ENCODE measurements at regions of chr20 and their contacts with region 1.

Region 1: GRCh38 chr20:4740774-4741431 is 19.2 kb downstream of the PRND start:
- DNase-seq: peak; percentile 58 to 66
- ATAC-seq: peak; percentile 72 to 86; a peak in 5 of 6 replicates
- H3K4me3 ChIP-seq: no peak overlapping the region
- H3K27ac ChIP-seq: no peak overlapping the region
- H3K4me1 ChIP-seq: no peaks in the 10 kb centered on the region
- CTCF ChIP-seq: peak; percentile 89
- EP300 ChIP-seq: no peak
- POLR2A ChIP-seq: no peak
- RAD21 ChIP-seq: peak; percentile 59 to 66

Region 2: GRCh38 chr20:4449957-4450715 is 290.8 kb before region 1 on chr20:
- CTCF ChIA-PET with region 1: no interaction called
- POLR2A ChIA-PET with region 1: no interaction called
- DNase-seq: peak; percentile 21 to 55
- ATAC-seq: peak; percentile 90 to 92
- H3K4me3 ChIP-seq: no peak overlapping the region
- H3K27ac ChIP-seq: no peak overlapping the region
- H3K4me1 ChIP-seq: peaks cover 5% of the 10 kb centered on the region; the same call in 2 of the 3 replicates
- CTCF ChIP-seq: no peak; the same call in 2 of the 3 replicates
- EP300 ChIP-seq: no peak
- POLR2A ChIP-seq: no peak
- RAD21 ChIP-seq: no peak

Region 3: GRCh38 chr20:4607287-4607713 is 133.6 kb before region 1 on chr20:
- CTCF ChIA-PET with region 1: interaction called, 13 read pairs
- POLR2A ChIA-PET with region 1: no interaction called
- DNase-seq: peak; percentile 75 to 84
- ATAC-seq: peak; percentile 69 to 92
- H3K4me3 ChIP-seq: no peak overlapping the region
- H3K27ac ChIP-seq: 0 out of 6 replicates have a peak overlapping the region, but pooled peaks of 1 of the 2 experiments have one; percentile 44
- H3K4me1 ChIP-seq: no peaks in the 10 kb centered on the region
- CTCF ChIP-seq: peak; percentile 99
- EP300 ChIP-seq: no peak
- POLR2A ChIP-seq: no peak
- RAD21 ChIP-seq: peak; percentile 99

Region 4: GRCh38 chr20:4720041-4720976 is 20.6 kb before region 1 on chr20:
- CTCF ChIA-PET with region 1: interaction called, 132 read pairs
- POLR2A ChIA-PET with region 1: no interaction called
- DNase-seq: peak; percentile 68 to 90
- ATAC-seq: peak; percentile 75 to 85
- H3K4me3 ChIP-seq: peak overlapping the region; percentile 23; the same call in 1 of the 3 replicates
- H3K27ac ChIP-seq: no peak overlapping the region
- H3K4me1 ChIP-seq: peaks cover 6% of the 10 kb centered on the region; the same call in 2 of the 3 replicates
- CTCF ChIP-seq: peak; percentile 99
- EP300 ChIP-seq: no peak
- POLR2A ChIP-seq: no peak
- RAD21 ChIP-seq: peak; percentile 99

Region 5: GRCh38 chr20:4730780-4731179 is 10.1 kb before region 1 on chr20:
- CTCF ChIA-PET with region 1: interaction called, 132 read pairs
- POLR2A ChIA-PET with region 1: no interaction called
- DNase-seq: no peak
- ATAC-seq: no peak
- H3K4me3 ChIP-seq: no peak overlapping the region
- H3K27ac ChIP-seq: no peak overlapping the region
- H3K4me1 ChIP-seq: peaks cover 6% of the 10 kb centered on the region; the same call in 1 of the 3 replicates
- CTCF ChIP-seq: no peak
- EP300 ChIP-seq: no peak
- POLR2A ChIP-seq: no peak
- RAD21 ChIP-seq: no peak

Region 6: GRCh38 chr20:4898282-4899244 is 157.7 kb after region 1 on chr20:
- CTCF ChIA-PET with region 1: interaction called, 12 read pairs
- POLR2A ChIA-PET with region 1: no interaction called
- DNase-seq: no peak
- ATAC-seq: peak in 1 of 2 experiments; percentile 54; a peak in 2 of 6 replicates
- H3K4me3 ChIP-seq: no peak overlapping the region
- H3K27ac ChIP-seq: 0 out of 6 replicates have a peak overlapping the region, but pooled peaks of 1 of the 2 experiments have one; percentile 0
- H3K4me1 ChIP-seq: peaks cover 14% of the 10 kb centered on the region; the same call in 2 of the 3 replicates
- CTCF ChIP-seq: no peak
- EP300 ChIP-seq: no peak
- POLR2A ChIP-seq: no peak
- RAD21 ChIP-seq: no peak

Region 7: GRCh38 chr20:4949833-4950178 is 208.9 kb after region 1 on chr20:
- CTCF ChIA-PET with region 1: interaction called, 14 read pairs
- POLR2A ChIA-PET with region 1: no interaction called
- DNase-seq: peak; percentile 46 to 60
- ATAC-seq: peak; percentile 84 to 86; a peak in 5 of 6 replicates
- H3K4me3 ChIP-seq: no peak overlapping the region
- H3K27ac ChIP-seq: no peak overlapping the region
- H3K4me1 ChIP-seq: peaks cover 31% of the 10 kb centered on the region; the same call in 2 of the 3 replicates
- CTCF ChIP-seq: peak; percentile 64
- EP300 ChIP-seq: no peak
- POLR2A ChIP-seq: no peak
- RAD21 ChIP-seq: peak; percentile 79 to 80

Region 8: GRCh38 chr20:4956200-4956810 is 215.4 kb after region 1 on chr20:
- CTCF ChIA-PET with region 1: interaction called, 14 read pairs
- POLR2A ChIA-PET with region 1: no interaction called
- DNase-seq: peak; percentile 76 to 79
- ATAC-seq: peak; percentile 80 to 81; a peak in 5 of 6 replicates
- H3K4me3 ChIP-seq: no peak overlapping the region
- H3K27ac ChIP-seq: no peak overlapping the region; a peak in 1 of 6 replicates
- H3K4me1 ChIP-seq: peaks cover 19% of the 10 kb centered on the region
- CTCF ChIP-seq: peak; percentile 97
- EP300 ChIP-seq: no peak
- POLR2A ChIP-seq: no peak
- RAD21 ChIP-seq: peak; percentile 90 to 94

Measured in A549 (cell line).